Activated CD8-positive, alpha-beta memory T cell treated with anti-CD3 and anti-CD28 coated beads, Interleukin-2, amount 10 ng/mL, durations not matched to agents 7 days and 5 days (primary cell): ENCODE measurements at regions of chr6 and their contacts with region 1.

Region 1: DNA sequence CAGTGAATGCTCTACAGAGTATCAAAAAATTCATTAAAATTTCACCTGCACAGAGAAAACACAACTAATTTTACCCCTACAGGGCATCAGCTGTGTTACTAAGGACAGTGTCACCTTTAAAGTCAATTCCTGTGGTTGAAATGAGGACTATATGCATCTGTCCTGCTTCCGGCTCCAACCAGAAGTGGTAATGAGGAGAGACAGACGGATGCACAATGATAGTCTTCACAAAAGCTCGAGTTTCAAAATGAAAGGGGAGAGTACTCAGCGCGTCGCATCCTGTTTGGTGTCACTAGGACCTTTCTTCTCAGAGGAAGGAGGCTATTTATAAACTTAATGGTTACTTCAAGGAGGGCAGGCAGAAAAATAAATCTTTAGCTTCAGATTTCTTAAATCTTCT is 86.5 kb downstream of the LYRM4 start:
- DNase-seq: peak; percentile 89
- ATAC-seq: peak; percentile 99
- H3K4me3 Mint-ChIP-seq: peak overlapping the region; percentile 60
- H3K27ac Mint-ChIP-seq: peak overlapping the region; percentile 95
- H3K4me1 Mint-ChIP-seq: peaks cover 50% of the 10 kb centered on the region
- H3K27me3 Mint-ChIP-seq: no peaks in the 10 kb centered on the region

Region 2: GRCh38 chr6:5115168-5115567 is 59.1 kb before region 1 on chr6:
- CTCF ChIA-PET with region 1: no interaction called
- DNase-seq: no peak
- ATAC-seq: no peak
- H3K4me3 Mint-ChIP-seq: no peak overlapping the region
- H3K27ac Mint-ChIP-seq: no peak overlapping the region
- H3K4me1 Mint-ChIP-seq: no peaks in the 10 kb centered on the region
- H3K27me3 Mint-ChIP-seq: no peaks in the 10 kb centered on the region

Region 3: DNA sequence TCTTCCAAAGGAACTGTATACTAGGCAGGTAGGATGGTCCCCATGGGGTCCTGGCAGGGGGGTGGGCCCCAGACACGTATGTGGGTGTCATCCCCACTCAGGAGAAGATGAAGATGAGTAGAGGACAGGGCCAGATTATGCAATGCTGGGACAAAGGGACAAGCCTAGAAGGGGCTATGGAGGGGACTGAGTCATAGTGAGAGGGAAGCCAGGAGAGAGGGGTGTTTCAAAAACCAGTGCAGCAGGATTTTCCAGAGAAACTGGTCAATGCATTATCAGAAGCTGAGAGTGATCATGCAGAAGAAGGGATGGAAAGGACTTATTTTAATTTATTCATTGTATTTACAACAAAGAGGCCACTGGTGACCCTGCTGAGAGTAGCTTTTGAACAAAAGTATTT is 15.1 kb before region 1 on chr6:
- CTCF ChIA-PET with region 1: interaction called, 13 read pairs
- DNase-seq: no peak
- ATAC-seq: no peak
- H3K4me3 Mint-ChIP-seq: no peak overlapping the region
- H3K27ac Mint-ChIP-seq: no peak overlapping the region
- H3K4me1 Mint-ChIP-seq: peaks cover 6% of the 10 kb centered on the region
- H3K27me3 Mint-ChIP-seq: no peaks in the 10 kb centered on the region